ENCODE measurements at regions of chr15 and their contacts with region 1.

Region 1: GRCh38 chr15:97909291-97909891 is 51.1 kb upstream of the ARRDC4 start:
- DNase-seq: peak; percentile 36 to 72
- H3K4me3 ChIP-seq: no peak overlapping the region
- H3K4me1 ChIP-seq: no peaks in the 10 kb centered on the region
- H3K27me3 ChIP-seq: no peaks in the 10 kb centered on the region; the same call in 1 of the 2 replicates

Region 2: GRCh38 chr15:98085003-98085639 is 175.7 kb after region 1 on chr15:
- in situ Hi-C with region 1: loop called (anchors 25 kb)
- DNase-seq: peak; percentile 36 to 45
- H3K4me3 ChIP-seq: no peak overlapping the region
- H3K4me1 ChIP-seq: no peaks in the 10 kb centered on the region
- H3K27me3 ChIP-seq: no peaks in the 10 kb centered on the region

Region 3: GRCh38 chr15:98292442-98293240 is 383.2 kb after region 1 on chr15:
- in situ Hi-C with region 1: loop called (anchors 10 kb)
- DNase-seq: peak; percentile 32 to 85
- H3K4me3 ChIP-seq: no peak overlapping the region
- H3K4me1 ChIP-seq: no peaks in the 10 kb centered on the region
- H3K27me3 ChIP-seq: peaks cover 16% of the 10 kb centered on the region; the same call in 1 of the 2 replicates

Region 4: DNA sequence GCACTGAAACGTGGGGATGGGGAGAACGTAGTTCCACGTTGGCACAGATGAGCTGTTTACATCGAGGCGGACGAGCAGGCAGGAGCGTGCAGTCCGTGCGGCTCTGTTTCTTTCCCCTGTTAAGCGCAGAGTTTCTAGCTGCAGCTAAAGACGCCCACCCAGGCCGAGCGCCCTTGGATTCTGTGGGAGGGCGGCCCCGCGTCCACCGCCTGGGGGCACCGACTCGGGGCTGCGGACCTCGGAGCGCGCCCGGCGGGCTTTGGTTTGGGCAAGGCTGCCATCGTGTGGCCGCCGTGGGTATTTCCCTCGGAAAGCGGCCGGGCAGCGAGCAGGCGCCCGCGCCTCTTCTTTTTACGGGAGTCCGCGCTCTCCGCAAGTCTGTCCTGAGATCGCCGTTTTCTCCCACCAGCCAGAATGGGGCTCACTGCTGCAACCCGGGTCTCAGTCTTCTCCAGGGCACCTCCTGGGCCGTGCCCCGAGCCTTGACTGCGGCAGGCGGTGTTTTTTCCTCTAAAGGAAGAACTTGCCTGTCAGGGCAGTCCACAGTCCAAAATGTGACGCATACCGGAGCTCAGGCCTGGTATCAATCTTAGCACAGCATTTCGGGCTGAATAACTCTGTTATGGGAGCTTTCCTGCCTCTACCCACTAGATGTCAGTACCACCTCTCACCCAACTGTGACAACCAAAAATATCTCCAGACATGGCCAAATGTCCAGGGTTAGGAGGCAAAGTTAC is 519.0 kb after region 1 on chr15:
- in situ Hi-C with region 1: loop called (anchors 10 kb)
- DNase-seq: peak; percentile 42 to 86
- H3K4me3 ChIP-seq: peak overlapping the region; percentile 25
- H3K4me1 ChIP-seq: no peaks in the 10 kb centered on the region
- H3K27me3 ChIP-seq: no peaks in the 10 kb centered on the region

Region 5: GRCh38 chr15:98581715-98582114 is 672.3 kb after region 1 on chr15:
- in situ Hi-C with region 1: no loop called
- DNase-seq: no peak
- H3K4me3 ChIP-seq: no peak overlapping the region
- H3K4me1 ChIP-seq: no peaks in the 10 kb centered on the region
- H3K27me3 ChIP-seq: peaks cover 60% of the 10 kb centered on the region